Activated naive CD4-positive, alpha-beta T cell treated with anti-CD3 and anti-CD28 coated beads for 36 hours (primary cell): ENCODE measurements at regions of chr13 and their contacts with region 1.

Region 1: DNA sequence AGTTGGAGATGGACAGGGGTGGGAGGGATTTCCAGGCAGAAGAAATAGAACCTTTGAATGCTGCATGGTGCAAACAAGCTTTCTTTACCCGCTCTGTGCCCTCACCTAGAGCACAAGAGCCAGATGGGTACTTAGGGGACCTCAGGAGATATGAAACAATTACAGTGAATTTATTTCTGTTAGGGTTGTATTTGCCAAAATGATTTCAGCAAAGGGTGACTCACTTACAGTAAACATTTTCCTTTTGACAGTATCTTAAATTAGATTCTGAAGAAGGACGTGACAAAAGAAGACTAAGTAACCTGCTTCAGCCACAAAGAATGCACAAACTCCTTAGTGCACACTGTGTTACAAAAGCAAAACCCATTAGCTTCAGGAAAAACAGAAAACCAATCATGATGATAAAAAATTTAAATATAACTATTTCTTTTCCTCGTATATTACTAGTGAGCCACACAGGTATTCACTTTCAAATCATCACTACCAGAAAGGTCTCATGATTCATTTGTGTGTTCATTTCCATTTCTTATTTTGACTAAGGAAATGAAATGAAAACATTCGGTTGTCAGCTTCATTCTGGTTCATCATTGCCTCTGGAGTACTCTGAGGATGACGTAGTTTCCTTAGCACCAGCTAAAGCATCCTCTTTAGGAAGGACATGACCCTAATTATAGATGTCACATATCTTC is 158.8 kb downstream of the NHLRC3 start:
- DNase-seq: no peak
- H3K4me3 Mint-ChIP-seq: no peak overlapping the region
- H3K27ac Mint-ChIP-seq: peak overlapping the region; percentile 60
- H3K4me1 Mint-ChIP-seq: peaks cover 11% of the 10 kb centered on the region
- H3K27me3 Mint-ChIP-seq: peaks cover 17% of the 10 kb centered on the region

Region 2: DNA sequence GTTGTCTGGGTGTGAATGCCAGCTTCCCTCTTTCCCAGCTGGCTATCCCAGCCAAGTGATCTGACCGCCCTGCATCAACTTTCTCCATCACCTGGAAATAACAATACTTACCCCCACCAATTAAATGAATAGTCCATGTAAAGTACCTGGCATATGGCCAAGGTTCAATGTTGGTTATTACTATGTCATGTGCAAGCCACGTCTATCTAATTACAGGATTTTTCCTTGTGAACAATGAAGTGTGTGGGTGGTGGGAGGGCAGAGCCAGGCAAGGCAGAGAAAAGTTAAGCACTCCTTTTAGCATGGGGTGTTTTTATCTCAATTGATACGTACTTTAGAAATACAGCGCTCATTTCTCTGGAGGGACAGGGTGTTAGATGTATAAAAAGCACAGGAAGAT is 37.7 kb before region 1 on chr13:
- CTCF ChIA-PET with region 1: no interaction called
- intact Hi-C with region 1: loop called (anchors 2 kb)
- DNase-seq: peak; percentile 31
- H3K4me3 Mint-ChIP-seq: no peak overlapping the region
- H3K27ac Mint-ChIP-seq: no peak overlapping the region
- H3K4me1 Mint-ChIP-seq: peaks cover 14% of the 10 kb centered on the region
- H3K27me3 Mint-ChIP-seq: peaks cover 35% of the 10 kb centered on the region

Region 3: GRCh38 chr13:39273953-39274738 is 77.0 kb after region 1 on chr13:
- CTCF ChIA-PET with region 1: no interaction called
- intact Hi-C with region 1: no loop called
- DNase-seq: peak; percentile 17
- H3K4me3 Mint-ChIP-seq: no peak overlapping the region
- H3K27ac Mint-ChIP-seq: no peak overlapping the region
- H3K4me1 Mint-ChIP-seq: no peaks in the 10 kb centered on the region
- H3K27me3 Mint-ChIP-seq: peaks cover 23% of the 10 kb centered on the region